A673 (cell line): ENCODE measurements at regions of chr2 and their contacts with region 1.

Region 1: DNA sequence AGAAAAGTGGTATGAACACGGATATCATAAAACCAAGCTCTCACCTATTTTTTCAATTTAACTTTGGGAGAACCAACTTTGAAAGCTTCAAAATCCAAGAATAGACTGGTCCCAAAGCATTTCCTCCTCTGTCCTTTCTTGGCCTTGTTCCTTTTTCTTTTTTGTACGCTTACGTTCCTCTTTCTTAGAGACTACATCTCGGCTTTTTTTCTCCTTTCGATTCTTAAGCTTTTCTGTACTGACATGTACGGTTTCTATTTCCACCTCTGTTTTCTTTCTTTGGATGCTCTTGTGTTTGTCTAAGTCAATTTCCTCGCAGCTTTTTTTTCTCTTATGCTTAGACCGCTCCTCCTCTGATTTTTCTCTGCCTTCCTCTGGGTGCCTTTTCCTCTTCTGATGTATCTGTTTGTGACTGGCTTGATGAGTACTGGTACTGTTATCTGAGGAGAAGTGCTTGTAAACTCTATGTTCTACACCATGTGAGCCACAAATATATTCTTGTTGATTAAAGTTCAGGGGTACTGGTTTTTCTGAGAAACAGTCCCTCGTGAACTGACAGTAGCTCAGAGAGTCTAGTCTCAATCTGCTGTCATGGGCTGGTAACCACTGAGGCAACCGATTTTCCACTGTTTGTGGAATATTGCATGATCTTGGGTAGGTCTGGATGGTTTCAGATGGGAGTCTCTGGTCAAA is 11.5 kb upstream of the RNU2-63P start:
- DNase-seq: no peak
- H3K4me3 ChIP-seq: no peak overlapping the region
- H3K27ac ChIP-seq: no peak overlapping the region
- H3K4me1 ChIP-seq: no peaks in the 10 kb centered on the region
- H3K27me3 ChIP-seq: no peaks in the 10 kb centered on the region
- CTCF ChIP-seq: no peak

Region 2: DNA sequence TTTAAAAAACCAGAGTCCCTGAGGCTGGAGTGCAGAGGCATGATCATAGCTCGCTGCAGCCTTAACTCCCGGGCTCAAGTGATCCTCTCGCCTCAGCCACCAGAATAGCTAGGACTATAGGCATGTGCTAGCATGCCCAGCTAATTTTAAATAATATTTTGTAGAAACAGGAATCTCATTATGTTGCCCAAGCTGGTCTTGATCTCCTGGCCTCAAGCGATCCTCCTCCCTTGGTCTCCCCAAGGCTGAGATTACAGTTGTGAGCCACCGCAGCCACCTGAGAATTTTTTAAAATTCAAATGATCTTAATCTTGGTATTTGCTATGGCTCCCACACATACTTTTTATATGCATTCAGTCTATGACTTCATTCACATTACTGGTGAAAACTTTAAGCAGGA is 14.6 kb after region 1 on chr2:
- CTCF ChIA-PET with region 1: no interaction called
- POLR2A ChIA-PET with region 1: no interaction called
- intact Hi-C with region 1: loop called (anchors 2 kb)
- DNase-seq: no peak
- H3K4me3 ChIP-seq: no peak overlapping the region
- H3K27ac ChIP-seq: no peak overlapping the region
- H3K4me1 ChIP-seq: no peaks in the 10 kb centered on the region
- H3K27me3 ChIP-seq: no peaks in the 10 kb centered on the region
- CTCF ChIP-seq: no peak